Tibial artery (tissue), 4 donors: ENCODE measurements at regions of chr1 and their contacts with region 1.

Region 1: GRCh38 chr1:229558571-229559335 is at the start of gene ABCB10:
- DNase-seq: peak; percentile 95 to 98
- H3K4me3 ChIP-seq: peak within 1 kb of the TSS; percentile 81 to 96
- H3K27ac ChIP-seq: peak within 1 kb of the TSS; percentile 91 to 96
- H3K4me1 ChIP-seq: peaks cover 0 to 58% (median 28%) of the 10 kb centered on the region in 4 donors
- H3K27me3 ChIP-seq: no peaks in the 10 kb centered on the region
- CTCF ChIP-seq: peak; percentile 68 to 74

Region 2: DNA sequence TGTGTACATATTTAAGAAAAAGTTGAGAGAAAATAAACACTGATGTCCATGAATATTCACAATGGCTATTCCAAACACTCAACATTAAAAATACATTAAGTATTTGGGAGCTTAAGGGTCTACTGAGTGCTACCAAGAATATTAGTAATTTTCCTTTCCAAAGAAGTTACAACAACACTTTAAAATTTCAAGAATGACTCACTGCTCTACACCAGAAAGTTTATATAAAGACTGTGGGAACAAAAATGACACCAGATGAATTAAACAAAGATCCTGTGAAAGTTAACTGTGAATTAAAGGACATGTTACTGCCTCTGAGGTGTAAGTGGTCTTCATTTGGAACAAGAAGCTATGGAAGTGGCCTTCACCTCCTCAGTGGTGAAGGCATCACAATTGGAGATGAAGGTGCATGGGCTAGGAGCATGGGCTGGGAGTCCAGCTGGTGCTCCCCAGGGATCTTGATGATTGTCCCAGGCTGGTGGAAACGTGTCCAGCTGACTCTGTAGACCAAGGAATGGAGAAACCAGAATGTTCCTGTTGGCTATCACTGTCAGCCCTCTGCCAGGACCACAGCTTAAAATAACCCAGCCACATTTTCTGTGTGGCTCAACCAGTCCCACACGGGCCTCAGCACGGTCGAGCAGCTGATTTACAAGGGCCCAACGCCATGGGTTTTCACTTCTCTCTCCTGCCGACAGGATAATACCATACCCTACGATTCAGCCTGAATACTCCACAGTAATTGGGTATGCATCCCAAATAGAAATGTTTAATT is 38.4 kb after region 1 on chr1:
- intact Hi-C with region 1: loop called (anchors 5 kb)
- DNase-seq: peak; percentile 80 to 94
- H3K4me3 ChIP-seq: peak overlapping the region; percentile 11 to 32
- H3K27ac ChIP-seq: peak overlapping the region; percentile 85 to 91
- H3K4me1 ChIP-seq: peaks cover 0 to 90% (median 37%) of the 10 kb centered on the region in 4 donors
- H3K27me3 ChIP-seq: no peaks in the 10 kb centered on the region
- CTCF ChIP-seq: peak; percentile 41 to 61

Region 3: DNA sequence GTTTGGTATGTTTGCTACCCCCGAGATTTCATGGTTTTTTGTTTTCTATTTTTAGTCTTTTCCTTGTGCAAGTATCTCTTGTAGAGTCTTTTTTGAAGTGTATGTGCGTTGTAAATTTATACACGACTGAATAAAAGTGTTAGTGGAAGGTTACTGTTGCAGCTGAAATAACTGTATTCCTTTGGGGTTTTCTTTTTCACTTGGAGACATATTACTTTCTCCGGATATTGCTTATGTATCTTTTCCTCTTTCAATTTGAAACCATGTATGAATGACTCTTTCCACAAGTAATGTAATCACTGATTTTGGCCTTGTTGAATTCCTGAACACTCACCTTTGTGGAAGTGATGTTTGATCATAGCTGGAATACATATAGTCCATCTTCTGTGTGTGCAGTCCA is 68.2 kb after region 1 on chr1:
- intact Hi-C with region 1: loop called (anchors 1 kb)
- DNase-seq: no peak
- H3K4me3 ChIP-seq: peak overlapping the region; percentile 73 to 77
- H3K27ac ChIP-seq: peak overlapping the region; percentile 78 to 91
- H3K4me1 ChIP-seq: peaks cover 0 to 44% (median 30%) of the 10 kb centered on the region in 4 donors
- H3K27me3 ChIP-seq: no peaks in the 10 kb centered on the region
- CTCF ChIP-seq: no peak